MCF 10A (cell line): ENCODE measurements at regions of chr12 and their contacts with region 1.

Region 1: DNA sequence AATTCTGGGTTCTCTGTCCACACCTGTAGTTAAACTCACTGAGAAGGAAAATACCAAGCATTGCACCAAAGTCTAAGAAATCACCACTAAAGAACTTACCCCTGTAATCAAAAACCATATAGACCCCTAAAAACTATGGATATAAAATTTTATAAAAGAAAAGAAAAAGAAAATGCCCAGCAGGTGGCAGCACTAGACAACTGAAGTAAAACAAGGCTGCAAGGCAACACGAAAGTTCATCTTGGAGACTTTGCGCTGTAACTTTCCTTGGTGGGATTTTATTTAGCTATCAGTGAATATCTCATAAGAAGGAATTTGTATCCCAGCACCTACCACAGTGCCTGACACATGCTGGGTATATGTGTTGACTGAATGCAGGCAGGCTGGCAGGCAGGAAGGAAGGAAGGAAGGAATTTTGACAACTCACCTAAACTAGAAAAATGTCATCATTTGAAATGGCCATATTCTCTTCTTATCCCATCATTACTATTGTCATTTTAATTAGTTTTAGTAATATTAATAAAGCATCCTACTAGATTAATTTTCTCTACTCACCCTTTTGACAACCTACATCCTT is 68.2 kb upstream of the ETV6 start:
- DNase-seq: peak; percentile 76
- H3K4me3 Mint-ChIP-seq: no peak overlapping the region
- H3K27ac Mint-ChIP-seq: no peak overlapping the region
- H3K4me1 Mint-ChIP-seq: peaks cover 44% of the 10 kb centered on the region
- H3K27me3 Mint-ChIP-seq: no peaks in the 10 kb centered on the region
- CTCF ChIP-seq: peak; percentile 52

Region 2: DNA sequence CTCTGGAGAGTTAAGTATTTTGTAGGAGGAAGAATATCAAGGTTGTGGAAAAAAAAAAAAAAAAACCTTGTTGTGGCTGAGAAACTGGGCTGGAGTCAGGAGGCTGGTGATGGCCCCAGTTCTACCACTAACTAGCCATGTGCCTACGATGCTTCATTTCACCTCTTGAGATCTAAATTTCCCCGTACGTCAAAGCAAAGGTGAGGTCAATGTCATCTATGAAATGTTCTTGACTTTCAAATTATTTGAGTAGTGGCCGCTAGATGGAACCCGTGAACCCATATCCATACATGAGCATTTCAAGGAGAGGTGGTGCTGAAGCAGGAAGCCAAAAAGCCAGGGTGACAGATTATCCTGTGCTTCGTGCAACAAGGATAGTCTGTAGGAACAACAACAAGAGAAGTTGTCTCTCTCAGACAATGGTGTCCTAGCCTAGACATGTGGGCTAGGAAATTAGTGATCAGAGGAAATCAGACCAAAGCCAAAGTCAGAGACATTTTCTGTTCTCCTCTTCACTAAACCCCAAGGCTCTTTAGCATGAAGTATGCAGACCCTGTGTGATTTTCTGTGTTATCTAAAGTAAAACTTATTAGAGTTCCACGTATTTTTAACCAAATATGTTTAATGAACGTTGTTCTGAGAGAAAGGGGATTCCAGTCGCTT is 27.3 kb before region 1 on chr12:
- CTCF ChIA-PET with region 1: interaction called, 29 read pairs
- POLR2A ChIA-PET with region 1: interaction called, 4 read pairs
- intact Hi-C with region 1: loop called (anchors 1 kb)
- DNase-seq: peak; percentile 78
- H3K4me3 Mint-ChIP-seq: no peak overlapping the region
- H3K27ac Mint-ChIP-seq: no peak overlapping the region
- H3K4me1 Mint-ChIP-seq: peaks cover 11% of the 10 kb centered on the region
- H3K27me3 Mint-ChIP-seq: peaks cover 57% of the 10 kb centered on the region
- CTCF ChIP-seq: peak; percentile 59

Region 3: GRCh38 chr12:11836282-11837151 is 255.2 kb after region 1 on chr12:
- CTCF ChIA-PET with region 1: interaction called, 3 read pairs
- POLR2A ChIA-PET with region 1: no interaction called
- intact Hi-C with region 1: loop called (anchors 10 kb)
- DNase-seq: no peak
- H3K4me3 Mint-ChIP-seq: no peak overlapping the region
- H3K27ac Mint-ChIP-seq: no peak overlapping the region
- H3K4me1 Mint-ChIP-seq: peaks cover 26% of the 10 kb centered on the region
- H3K27me3 Mint-ChIP-seq: no peaks in the 10 kb centered on the region
- CTCF ChIP-seq: no peak

Region 4: GRCh38 chr12:11891754-11892386 is 310.6 kb after region 1 on chr12:
- CTCF ChIA-PET with region 1: interaction called, 7 read pairs
- POLR2A ChIA-PET with region 1: interaction called, 6 read pairs
- intact Hi-C with region 1: loop called (anchors 2 kb)
- DNase-seq: no peak
- H3K4me3 Mint-ChIP-seq: no peak overlapping the region
- H3K27ac Mint-ChIP-seq: no peak overlapping the region
- H3K4me1 Mint-ChIP-seq: peaks cover 3% of the 10 kb centered on the region
- H3K27me3 Mint-ChIP-seq: no peaks in the 10 kb centered on the region
- CTCF ChIP-seq: peak; percentile 28

Region 5: DNA sequence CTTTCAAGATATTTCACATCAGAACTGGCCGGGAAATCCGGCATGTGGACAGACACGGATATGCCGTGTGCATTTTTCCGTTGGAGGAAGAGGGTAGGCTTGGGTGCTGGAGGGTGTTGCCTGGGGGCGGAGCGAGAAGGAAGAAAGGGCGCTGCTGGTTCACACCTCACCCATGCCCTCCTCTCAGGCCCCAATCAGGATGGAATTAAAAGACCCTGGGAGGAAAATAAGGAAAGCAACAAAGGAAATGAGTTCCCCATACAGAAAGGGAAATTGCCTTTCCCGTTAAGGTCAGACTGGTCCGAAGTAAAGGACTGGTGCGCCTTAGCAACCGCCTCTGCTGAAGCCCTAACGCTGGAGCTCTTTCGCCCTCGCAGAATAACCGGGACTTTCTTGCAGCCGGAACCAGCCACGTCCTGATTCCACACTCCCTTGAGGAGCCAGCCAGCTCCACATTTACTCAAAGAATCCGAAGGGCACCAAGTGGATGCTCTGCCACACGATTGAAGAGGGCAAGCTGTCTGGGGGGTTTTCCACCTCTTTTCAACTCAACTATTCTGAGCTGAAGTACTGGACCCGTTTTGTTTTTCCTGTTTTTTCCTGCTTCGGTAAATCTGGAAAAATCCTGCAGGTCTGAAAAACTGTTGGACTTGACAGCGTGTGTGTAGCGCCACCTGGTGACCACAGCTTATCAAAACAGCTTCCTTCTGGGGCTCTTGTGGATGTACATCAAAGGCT is 451.8 kb after region 1 on chr12:
- CTCF ChIA-PET with region 1: interaction called, 259 read pairs
- POLR2A ChIA-PET with region 1: interaction called, 44 read pairs
- intact Hi-C with region 1: loop called (anchors 1 kb)
- DNase-seq: peak; percentile 84
- H3K4me3 Mint-ChIP-seq: no peak overlapping the region
- H3K27ac Mint-ChIP-seq: no peak overlapping the region
- H3K4me1 Mint-ChIP-seq: peaks cover 5% of the 10 kb centered on the region
- H3K27me3 Mint-ChIP-seq: no peaks in the 10 kb centered on the region
- CTCF ChIP-seq: peak; percentile 85